Esophagus squamous epithelium (tissue), 5 donors: ENCODE measurements at regions of chr14 and their contacts with region 1.

Region 1: DNA sequence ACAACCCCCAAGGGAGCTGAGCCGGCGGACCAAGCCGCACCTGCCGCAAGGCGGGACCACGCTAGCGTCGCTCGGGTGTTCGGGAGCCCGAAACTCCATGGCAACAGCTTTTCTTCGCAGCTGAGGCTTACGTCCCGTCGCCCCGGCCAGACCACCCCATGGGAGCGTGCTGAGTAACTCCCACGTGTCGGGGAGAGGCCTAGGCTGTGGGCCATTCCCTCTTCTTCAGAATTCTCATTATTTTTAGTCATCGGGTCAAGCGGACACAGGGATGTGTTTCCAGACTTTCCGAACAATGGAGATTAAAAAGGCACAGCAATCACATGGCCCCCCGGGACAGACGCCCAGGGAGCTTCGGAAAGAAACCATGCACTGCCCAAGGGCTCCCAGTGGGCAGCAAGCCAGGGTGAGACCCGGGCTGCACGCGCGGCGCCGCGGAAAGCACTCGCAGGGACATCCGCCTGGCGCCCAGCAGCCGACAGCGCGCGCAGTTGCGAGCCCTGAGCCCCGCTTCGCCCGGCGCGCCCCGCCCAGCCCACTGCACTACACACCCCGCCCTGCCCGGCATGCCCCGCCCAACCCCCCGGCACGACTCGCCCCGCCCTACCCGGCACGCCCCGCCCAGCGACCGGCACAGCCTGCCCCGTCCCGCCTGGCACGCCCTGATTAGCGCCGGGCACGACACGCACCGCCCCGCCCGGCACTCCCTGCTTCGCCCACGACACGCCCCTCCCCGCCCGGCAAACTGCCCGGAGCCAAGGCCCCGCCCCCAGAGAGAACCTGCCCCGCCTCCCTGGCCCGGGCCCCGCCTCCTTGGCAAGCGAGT is 422 bp upstream of the AK7 start:
- DNase-seq: peak; percentile 86
- H3K4me3 ChIP-seq: peak overlapping the region; percentile 84 to 96 (median 89)
- H3K27ac ChIP-seq: peak overlapping the region; percentile 77 to 89 (median 83)
- H3K4me1 ChIP-seq: peaks cover 0 to 27% (median 6%) of the 10 kb centered on the region in 3 donors
- H3K27me3 ChIP-seq: no peaks in the 10 kb centered on the region
- CTCF ChIP-seq: peak in 1 of 6 experiments; percentile 19
- POLR2A ChIP-seq: peak in 2 of 4 donors; percentile 20 to 33

Region 2: DNA sequence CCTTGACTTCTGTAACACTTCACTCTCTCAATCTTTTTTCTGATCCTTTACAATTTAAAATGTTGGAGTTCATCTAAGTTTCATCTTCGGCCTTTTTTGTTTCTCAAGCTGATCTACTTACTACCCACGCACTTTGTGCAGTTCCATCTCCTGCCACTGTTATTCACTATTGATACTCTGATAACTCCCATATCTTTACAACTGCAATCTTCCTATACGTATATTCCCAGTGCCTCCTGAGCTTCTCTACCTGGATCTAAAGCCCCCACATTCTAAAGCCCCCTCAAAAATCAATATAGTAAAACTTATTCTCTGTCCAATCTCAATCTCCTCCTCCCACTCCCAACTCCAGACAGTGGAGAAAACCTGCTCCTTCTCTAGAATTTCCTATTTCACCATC is 34.3 kb before region 1 on chr14:
- intact Hi-C with region 1: loop called (anchors 5 kb)
- DNase-seq: no peak
- H3K4me3 ChIP-seq: no peak overlapping the region
- H3K27ac ChIP-seq: no peak overlapping the region
- H3K4me1 ChIP-seq: peaks cover 4 to 41% (median 14%) of the 10 kb centered on the region in 3 donors
- H3K27me3 ChIP-seq: no peaks in the 10 kb centered on the region
- CTCF ChIP-seq: peak in 1 of 6 experiments; percentile 5
- POLR2A ChIP-seq: no peak